ENCODE measurements at regions of chr4 and their contacts with region 1.

Region 1: GRCh38 chr4:44678094-44679041 is at the start of gene GUF1:
- DNase-seq: peak; percentile 79
- ATAC-seq: peak; percentile 93
- H3K4me3 ChIP-seq: peak within 1 kb of the TSS; percentile 91 to 96
- H3K27ac ChIP-seq: peak within 1 kb of the TSS; percentile 79
- H3K4me1 ChIP-seq: peaks cover 3 to 13% of the 10 kb centered on the region in 2 experiments; a peak in 3 of 4 replicates
- H3K27me3 ChIP-seq: no peaks in the 10 kb centered on the region
- CTCF ChIP-seq: no peak
- POLR2A ChIP-seq: peak; percentile 87
- RAD21 ChIP-seq: no peak
- total RNA-seq, gene GUF1: 30.5 TPM

Region 2: GRCh38 chr4:44256414-44256813 is 422.0 kb before region 1 on chr4:
- CTCF ChIA-PET with region 1: no interaction called
- POLR2A ChIA-PET with region 1: no interaction called
- RAD21 ChIA-PET with region 1: no interaction called
- intact Hi-C with region 1: no loop called
- DNase-seq: no peak
- ATAC-seq: no peak
- H3K4me3 ChIP-seq: no peak overlapping the region
- H3K27ac ChIP-seq: no peak overlapping the region
- H3K4me1 ChIP-seq: no peaks in the 10 kb centered on the region
- H3K27me3 ChIP-seq: no peaks in the 10 kb centered on the region
- CTCF ChIP-seq: no peak
- POLR2A ChIP-seq: no peak
- RAD21 ChIP-seq: no peak

Region 3: DNA sequence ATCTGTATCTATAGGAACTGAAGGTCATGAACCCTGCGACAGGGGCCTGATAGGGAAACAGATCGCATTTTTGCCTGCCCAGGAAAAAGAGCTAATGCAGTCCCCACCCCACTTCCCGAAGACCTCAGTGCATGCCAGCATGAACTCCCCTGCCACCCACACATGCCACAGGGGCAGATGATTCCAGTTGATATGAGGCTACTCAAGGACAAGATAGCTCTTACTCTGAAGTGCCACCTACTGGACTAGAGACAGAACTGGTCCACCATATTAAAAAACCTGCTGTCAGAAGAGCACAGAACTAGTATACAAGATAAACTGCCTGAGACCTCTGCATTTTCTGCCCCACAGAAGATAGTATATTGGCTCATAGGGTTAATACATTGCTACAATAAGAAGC is 95.0 kb before region 1 on chr4:
- CTCF ChIA-PET with region 1: no interaction called
- POLR2A ChIA-PET with region 1: no interaction called
- RAD21 ChIA-PET with region 1: no interaction called
- intact Hi-C with region 1: no loop called
- DNase-seq: no peak
- ATAC-seq: no peak
- H3K4me3 ChIP-seq: no peak overlapping the region
- H3K27ac ChIP-seq: no peak overlapping the region
- H3K4me1 ChIP-seq: no peaks in the 10 kb centered on the region
- H3K27me3 ChIP-seq: no peaks in the 10 kb centered on the region
- CTCF ChIP-seq: no peak
- POLR2A ChIP-seq: no peak
- RAD21 ChIP-seq: no peak

Region 4: DNA sequence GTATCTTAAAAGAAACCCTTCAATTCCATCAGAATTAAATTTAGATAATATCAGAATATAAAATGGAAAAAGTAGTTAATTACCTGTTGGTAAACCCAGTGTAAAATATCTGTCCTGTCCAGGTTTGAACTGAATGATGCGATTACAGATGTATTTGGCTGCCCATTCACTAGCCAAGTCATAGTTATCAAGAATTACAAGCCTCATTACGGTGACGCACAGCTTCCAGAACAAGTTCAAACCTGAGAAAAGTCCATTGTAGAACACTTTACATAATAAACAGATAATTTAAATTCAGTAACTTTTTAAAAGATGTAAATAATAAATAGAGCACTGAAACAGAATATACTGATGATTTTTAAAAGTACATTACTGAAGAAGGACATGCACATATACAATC is 43.6 kb after region 1 on chr4:
- CTCF ChIA-PET with region 1: no interaction called
- POLR2A ChIA-PET with region 1: interaction called, 3 read pairs
- RAD21 ChIA-PET with region 1: no interaction called
- intact Hi-C with region 1: loop called (anchors 2 kb)
- DNase-seq: no peak
- ATAC-seq: no peak
- H3K4me3 ChIP-seq: no peak overlapping the region
- H3K27ac ChIP-seq: no peak overlapping the region
- H3K4me1 ChIP-seq: peaks cover 0 to 10% of the 10 kb centered on the region in 2 experiments; a peak in 3 of 4 replicates
- H3K27me3 ChIP-seq: no peaks in the 10 kb centered on the region
- CTCF ChIP-seq: no peak
- POLR2A ChIP-seq: no peak
- RAD21 ChIP-seq: no peak

Measured in HCT116 (cell line).